Aorta (tissue), 5 donors: ENCODE measurements at regions of chr18 and their contacts with region 1.

Region 1: DNA sequence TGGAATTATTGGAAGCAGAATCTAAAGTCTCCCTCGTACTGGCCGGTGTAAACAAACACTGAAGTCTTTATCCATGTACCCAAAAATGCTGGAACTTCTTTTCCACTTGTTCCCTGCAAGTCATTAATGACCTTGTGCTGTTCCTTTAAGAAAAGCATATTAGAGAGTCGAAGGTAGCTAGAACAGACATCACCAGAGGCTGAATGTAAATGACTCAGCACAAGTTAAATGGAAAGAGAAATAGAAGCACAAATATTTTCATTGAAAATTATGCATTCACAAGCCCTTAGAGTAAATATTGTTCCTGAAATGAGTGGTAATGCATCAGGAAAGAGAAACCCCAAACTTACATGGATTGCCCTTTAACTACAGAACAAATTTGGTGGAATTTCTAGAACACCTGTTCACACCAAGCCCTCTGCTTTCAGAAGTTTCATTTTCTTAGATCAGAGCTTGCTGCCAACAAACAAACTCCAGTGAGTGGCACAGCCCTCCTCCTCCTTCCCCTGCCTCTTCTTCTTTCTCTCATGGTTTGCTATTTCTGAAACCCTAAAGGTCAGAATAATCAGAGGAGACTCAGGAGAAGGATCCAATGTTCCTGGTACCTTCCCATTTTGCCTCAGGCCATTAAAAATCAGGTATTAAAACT is 264.3 kb downstream of the TXNL1 start:
- DNase-seq: no peak
- ATAC-seq: no peak
- H3K4me3 ChIP-seq: no peak overlapping the region
- H3K27ac ChIP-seq: no peak overlapping the region
- H3K4me1 ChIP-seq: no peaks in the 10 kb centered on the region
- H3K27me3 ChIP-seq: no peaks in the 10 kb centered on the region

Region 2: DNA sequence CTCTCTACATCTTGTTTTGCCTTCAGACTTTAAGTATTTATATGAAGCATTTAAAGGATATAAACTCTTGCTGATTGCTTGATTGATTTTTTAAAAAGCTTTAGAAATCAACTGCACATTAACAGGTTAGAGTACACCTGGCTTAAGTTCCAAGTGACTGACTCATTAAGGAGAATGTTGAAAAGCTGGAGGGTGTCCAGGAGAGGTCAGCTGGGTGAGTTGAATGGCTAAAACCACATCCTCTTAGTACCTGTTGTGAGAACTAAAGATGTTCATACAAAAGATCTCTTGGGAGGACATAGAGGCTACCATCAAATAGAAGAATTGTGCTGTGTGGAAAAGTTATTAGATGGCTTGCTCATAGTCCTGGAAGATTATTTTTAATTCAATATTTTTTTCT is 57.4 kb after region 1 on chr18:
- intact Hi-C with region 1: loop called in 1 of 2 experiments (anchors 10 kb)
- DNase-seq: no peak
- ATAC-seq: no peak
- H3K4me3 ChIP-seq: no peak overlapping the region
- H3K27ac ChIP-seq: no peak overlapping the region
- H3K4me1 ChIP-seq: no peaks in the 10 kb centered on the region
- H3K27me3 ChIP-seq: no peaks in the 10 kb centered on the region